K562 (cell line): ENCODE measurements at regions of chr2 and their contacts with region 1.

Region 1: DNA sequence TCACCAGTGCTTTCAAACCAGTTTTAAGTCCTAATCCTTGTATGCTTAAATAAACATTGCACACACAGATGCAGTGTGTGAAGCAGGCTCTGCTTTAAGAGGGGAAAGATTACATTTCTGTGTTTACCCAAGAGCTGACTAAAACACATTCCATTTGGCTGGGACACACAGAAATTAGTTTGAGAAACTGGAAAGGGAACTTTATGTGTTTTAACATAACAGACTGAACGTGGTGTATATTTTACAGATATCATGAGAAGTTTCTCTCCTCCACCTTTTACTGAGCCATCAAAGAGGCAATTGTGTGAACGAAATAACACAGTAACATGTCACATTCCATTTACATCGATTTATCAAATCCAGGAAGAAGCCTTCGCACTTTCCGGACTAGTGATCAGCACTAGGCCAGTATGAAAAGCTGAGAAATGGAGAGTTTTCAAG is 121.8 kb downstream of the MAIP1 start:
- DNase-seq: no peak
- ATAC-seq: no peak
- H3K4me3 ChIP-seq: no peak overlapping the region
- H3K27ac ChIP-seq: no peak overlapping the region
- H3K4me1 ChIP-seq: no peaks in the 10 kb centered on the region
- H3K27me3 ChIP-seq: no peaks in the 10 kb centered on the region
- CTCF ChIP-seq: no peak
- EP300 ChIP-seq: no peak
- POLR2A ChIP-seq: no peak
- RAD21 ChIP-seq: no peak

Region 2: DNA sequence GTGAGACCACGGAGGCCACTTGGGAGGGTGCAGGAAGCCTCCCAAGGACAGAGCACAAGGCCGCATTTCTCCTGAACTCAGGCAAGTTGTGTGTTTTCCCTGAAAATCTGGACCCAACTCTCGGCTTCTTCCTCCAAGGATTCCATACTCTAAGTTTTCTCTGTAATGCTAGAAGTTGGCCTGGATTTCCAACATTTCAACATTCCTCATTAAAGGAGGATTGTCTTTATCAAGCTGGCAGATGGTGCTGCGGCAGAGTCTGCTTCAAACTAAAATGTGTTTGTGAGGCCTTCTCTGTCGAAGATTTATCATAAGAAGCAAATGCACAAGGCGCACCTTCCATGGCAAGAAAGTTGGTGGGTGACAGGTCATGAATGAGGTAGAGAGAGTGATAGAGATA is 525.1 kb before region 1 on chr2:
- CTCF ChIA-PET with region 1: no interaction called
- POLR2A ChIA-PET with region 1: no interaction called
- in situ Hi-C with region 1: no loop called
- intact Hi-C with region 1: no loop called
- DNase-seq: no peak
- ATAC-seq: no peak
- H3K4me3 ChIP-seq: no peak overlapping the region
- H3K27ac ChIP-seq: no peak overlapping the region
- H3K4me1 ChIP-seq: no peaks in the 10 kb centered on the region; a peak in 1 of 5 replicates
- H3K27me3 ChIP-seq: peaks cover 0 to 19% of the 10 kb centered on the region in 2 experiments; a peak in 3 of 5 replicates
- CTCF ChIP-seq: no peak
- EP300 ChIP-seq: no peak
- POLR2A ChIP-seq: no peak
- RAD21 ChIP-seq: no peak

Region 3: GRCh38 chr2:199922856-199923255 is 154.4 kb before region 1 on chr2:
- CTCF ChIA-PET with region 1: no interaction called
- POLR2A ChIA-PET with region 1: no interaction called
- in situ Hi-C with region 1: no loop called
- intact Hi-C with region 1: no loop called
- DNase-seq: peak in 2 of 4 experiments; percentile 26 to 52
- ATAC-seq: peak; percentile 97
- H3K4me3 ChIP-seq: no peak overlapping the region
- H3K27ac ChIP-seq: peak overlapping the region; percentile 65; the same call in 2 of the 3 replicates
- H3K4me1 ChIP-seq: no peaks in the 10 kb centered on the region; a peak in 1 of 5 replicates
- H3K27me3 ChIP-seq: no peaks in the 10 kb centered on the region
- CTCF ChIP-seq: no peak
- EP300 ChIP-seq: no peak
- POLR2A ChIP-seq: no peak
- RAD21 ChIP-seq: no peak

Region 4: DNA sequence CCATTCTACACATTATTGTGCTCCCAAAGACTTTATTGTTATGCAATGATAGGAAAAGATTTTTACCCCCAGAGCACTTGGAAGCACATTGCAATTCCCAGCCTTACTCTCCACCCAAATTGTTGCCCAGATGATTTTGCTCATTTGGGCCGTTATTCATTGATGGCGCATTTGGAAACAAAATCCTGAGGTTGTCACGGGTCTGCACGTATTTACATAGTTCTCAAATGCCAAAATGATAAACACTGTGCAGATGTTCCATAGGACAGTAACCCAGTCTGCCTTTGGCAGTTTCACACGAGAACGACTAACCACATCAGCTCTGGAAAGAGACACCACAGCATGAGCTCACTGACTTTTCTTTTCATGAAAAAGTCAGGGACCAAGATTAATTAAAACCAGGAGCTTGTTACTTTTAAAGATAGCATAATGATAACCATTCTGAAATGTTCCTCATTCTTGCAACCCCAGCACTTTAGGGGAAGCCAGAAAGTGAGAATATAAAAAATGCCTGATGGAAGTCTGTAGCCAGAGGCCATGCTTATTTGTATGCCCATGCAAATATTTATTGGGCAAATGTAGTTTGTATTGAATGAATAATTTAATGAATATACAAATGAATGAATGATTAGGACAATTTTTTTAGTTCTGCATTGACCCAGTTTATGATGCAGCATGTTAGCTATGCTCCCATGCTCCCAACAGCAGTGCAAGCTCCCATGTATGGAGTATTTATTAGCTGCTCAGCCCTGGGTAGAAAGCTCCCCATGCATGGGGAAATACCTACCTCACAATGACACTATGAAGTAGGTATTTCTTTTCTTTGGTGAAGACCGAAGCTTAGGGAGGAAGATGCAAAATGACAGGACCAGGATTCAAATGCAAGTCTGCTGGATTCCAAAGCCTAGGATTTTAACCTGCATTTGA is 37.2 kb before region 1 on chr2:
- CTCF ChIA-PET with region 1: no interaction called
- POLR2A ChIA-PET with region 1: no interaction called
- in situ Hi-C with region 1: loop called (anchors 5 kb)
- intact Hi-C with region 1: no loop called
- DNase-seq: no peak
- ATAC-seq: no peak
- H3K4me3 ChIP-seq: no peak overlapping the region
- H3K27ac ChIP-seq: no peak overlapping the region
- H3K4me1 ChIP-seq: no peaks in the 10 kb centered on the region; a peak in 2 of 5 replicates
- H3K27me3 ChIP-seq: no peaks in the 10 kb centered on the region
- CTCF ChIP-seq: no peak
- EP300 ChIP-seq: no peak
- POLR2A ChIP-seq: no peak
- RAD21 ChIP-seq: no peak